Endothelial cell of umbilical vein (primary cell): ENCODE measurements at regions of chr2 and their contacts with region 1.

Region 1: DNA sequence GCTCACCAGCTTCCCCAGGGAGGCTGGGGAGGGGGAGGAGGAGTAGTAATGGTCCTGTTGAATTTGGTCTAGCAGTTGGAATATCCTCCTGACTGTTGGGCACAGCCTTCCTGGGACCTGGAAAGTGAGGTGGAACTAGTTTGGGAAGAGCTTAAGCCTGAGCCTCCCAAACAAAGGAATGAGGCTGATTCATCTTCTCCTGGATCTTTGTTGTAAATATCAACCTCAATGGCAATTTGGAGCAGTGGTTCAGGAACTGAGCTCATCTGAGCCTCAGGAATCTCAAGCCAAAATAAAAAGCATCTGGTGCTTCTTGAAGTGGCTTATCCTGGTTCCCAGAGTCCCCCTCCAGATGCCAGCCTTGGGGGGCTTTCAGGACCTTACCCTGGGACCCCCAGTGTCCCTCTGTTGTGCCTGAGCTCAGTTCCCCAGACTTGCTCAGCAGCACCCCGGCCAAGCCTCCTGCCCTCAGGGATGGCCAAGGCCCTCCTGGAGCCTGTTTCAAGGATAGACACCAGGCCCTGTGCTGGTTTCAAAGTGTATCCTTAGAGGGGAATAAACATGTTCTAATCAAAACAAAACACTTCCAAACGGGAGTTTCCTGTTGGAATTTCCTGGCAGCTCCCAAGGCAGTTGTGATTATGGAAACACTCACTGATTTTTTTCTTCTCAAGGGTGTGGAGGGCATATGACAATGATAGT is 112.6 kb downstream of the DDX1 start:
- DNase-seq: peak; percentile 76
- H3K4me3 ChIP-seq: no peak overlapping the region
- H3K27ac ChIP-seq: peak overlapping the region; percentile 85
- H3K4me1 ChIP-seq: peaks cover 35% of the 10 kb centered on the region
- H3K27me3 ChIP-seq: no peaks in the 10 kb centered on the region
- CTCF ChIP-seq: no peak
- POLR2A ChIP-seq: no peak

Region 2: DNA sequence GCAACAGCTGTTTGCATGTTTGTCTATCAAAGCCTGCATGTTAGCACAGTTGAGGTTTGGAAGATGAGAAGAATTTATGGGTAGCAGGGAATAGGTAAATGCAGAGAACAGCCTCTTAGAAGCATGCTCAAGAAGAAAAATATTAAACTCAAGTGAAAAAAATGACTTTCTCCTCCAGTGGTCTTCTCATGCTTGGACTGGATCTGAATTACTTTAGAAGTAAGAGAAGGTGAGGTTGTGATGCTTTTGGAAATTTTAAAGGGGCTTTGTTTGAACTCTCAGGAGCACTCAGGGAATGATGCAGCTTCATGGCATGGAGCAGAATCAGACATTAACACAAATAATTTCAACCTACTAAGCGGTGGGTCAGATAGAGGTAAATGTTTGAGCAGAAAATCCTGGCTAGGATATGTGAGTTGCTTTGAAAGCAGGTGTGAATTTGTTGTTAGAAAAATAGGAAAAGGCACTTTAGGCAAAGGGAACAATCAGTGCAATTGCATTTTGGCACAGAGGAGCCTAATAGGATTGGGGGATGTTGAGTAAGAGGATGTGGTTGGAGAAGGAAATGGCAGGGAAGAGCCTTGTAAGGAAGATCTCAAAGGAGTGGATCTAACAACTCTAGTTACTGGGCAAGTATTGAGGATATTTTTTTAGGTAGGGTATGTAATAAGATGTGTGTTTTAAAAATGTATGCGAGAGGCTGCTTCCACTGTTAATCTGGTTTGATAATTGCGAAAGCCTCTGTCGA is 36.3 kb before region 1 on chr2:
- CTCF ChIA-PET with region 1: interaction called, 3 read pairs
- POLR2A ChIA-PET with region 1: no interaction called
- dilution Hi-C with region 1: no loop called
- intact Hi-C with region 1: loop called (anchors 1 kb)
- DNase-seq: peak; percentile 39
- H3K4me3 ChIP-seq: no peak overlapping the region
- H3K27ac ChIP-seq: peak overlapping the region; percentile 72
- H3K4me1 ChIP-seq: peaks cover 24% of the 10 kb centered on the region
- H3K27me3 ChIP-seq: no peaks in the 10 kb centered on the region
- CTCF ChIP-seq: no peak
- POLR2A ChIP-seq: no peak

Region 3: GRCh38 chr2:15730545-15731212 is 26.4 kb after region 1 on chr2:
- CTCF ChIA-PET with region 1: interaction called, 7 read pairs
- POLR2A ChIA-PET with region 1: no interaction called
- dilution Hi-C with region 1: no loop called
- intact Hi-C with region 1: loop called (anchors 1 kb)
- DNase-seq: peak; percentile 97
- H3K4me3 ChIP-seq: no peak overlapping the region
- H3K27ac ChIP-seq: peak overlapping the region; percentile 24
- H3K4me1 ChIP-seq: peaks cover 31% of the 10 kb centered on the region
- H3K27me3 ChIP-seq: peaks cover 0 to 1% of the 10 kb centered on the region in 2 experiments
- CTCF ChIP-seq: no peak
- POLR2A ChIP-seq: peak; percentile 24

Region 4: DNA sequence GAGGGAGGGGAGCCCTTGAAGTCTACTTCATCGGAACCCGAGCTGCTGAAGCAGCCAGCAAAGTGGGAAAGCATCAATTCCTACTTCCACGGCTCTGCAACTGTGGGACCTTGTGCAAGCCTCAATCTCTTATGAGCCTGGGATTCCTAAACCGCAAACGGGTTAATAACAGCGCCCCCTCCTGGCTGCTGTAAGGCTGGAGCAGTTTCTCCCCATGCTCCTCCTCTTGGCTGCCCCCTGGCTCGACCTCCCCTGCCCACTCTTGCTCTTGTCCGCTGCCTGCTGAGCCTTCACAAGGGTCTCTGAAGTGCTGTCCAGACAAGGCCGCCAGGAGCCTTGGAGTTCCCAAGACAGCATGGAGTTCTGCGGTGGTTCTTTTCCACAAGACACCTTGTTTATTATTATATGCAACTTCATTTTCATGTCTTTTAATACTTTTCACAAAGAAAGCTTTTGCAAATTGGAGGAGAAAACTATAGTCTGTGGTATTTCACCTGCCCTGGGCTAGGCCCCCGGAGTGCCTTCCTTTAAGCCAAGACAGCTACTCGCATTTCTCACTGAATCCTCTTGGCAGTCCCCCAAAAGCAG is 44.6 kb after region 1 on chr2:
- CTCF ChIA-PET with region 1: no interaction called
- POLR2A ChIA-PET with region 1: no interaction called
- dilution Hi-C with region 1: no loop called
- intact Hi-C with region 1: loop called (anchors 1 kb)
- DNase-seq: no peak
- H3K4me3 ChIP-seq: no peak overlapping the region
- H3K27ac ChIP-seq: no peak overlapping the region
- H3K4me1 ChIP-seq: peaks cover 16% of the 10 kb centered on the region
- H3K27me3 ChIP-seq: peaks cover 0 to 2% of the 10 kb centered on the region in 2 experiments
- CTCF ChIP-seq: peak; percentile 51
- POLR2A ChIP-seq: no peak

Region 5: DNA sequence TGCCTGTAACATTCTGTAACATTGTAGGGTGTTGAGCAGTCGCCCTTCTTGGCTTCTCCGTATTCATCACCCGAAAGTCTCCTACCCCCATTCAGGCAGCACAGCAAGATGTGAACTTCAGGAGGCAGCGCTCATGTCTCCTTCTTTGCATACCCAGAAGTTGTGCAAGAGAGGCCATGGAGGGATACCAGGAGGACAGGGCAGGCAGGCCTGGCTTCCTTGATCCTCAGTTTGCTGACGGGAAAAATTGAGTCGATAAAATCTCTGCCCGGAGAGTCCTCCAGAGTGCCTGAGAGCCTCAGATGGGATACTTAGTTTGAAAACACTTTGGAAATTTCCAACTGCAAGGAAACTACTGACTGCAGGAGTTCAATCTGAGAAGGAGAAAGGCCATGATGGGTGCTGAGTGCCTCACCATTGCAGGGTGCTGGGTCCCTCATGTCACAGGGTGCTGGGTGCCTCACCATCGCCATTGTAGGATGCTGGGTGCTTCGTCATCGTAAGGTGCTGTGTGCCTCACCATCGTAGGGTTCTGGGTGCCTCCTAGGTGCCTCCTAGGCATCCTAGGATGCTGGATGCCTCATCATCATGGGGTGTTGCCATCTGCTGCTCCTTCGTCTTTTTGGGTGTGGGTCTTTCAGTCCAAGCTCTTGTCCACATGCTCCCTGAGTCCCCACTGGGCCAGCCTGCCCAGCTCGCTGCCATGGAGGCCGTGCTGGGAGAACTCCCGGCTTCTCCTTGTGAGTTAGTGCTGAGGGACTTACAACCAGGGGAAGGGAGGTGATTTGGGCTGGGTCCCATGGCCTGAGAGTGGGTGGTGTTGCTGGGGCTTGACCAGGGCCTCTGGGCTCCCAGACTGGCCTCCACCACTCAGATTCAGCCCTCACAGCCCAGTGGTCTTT is 49.8 kb after region 1 on chr2:
- CTCF ChIA-PET with region 1: interaction called, 4 read pairs
- POLR2A ChIA-PET with region 1: no interaction called
- dilution Hi-C with region 1: no loop called
- intact Hi-C with region 1: loop called (anchors 1 kb)
- DNase-seq: no peak
- H3K4me3 ChIP-seq: no peak overlapping the region
- H3K27ac ChIP-seq: no peak overlapping the region
- H3K4me1 ChIP-seq: peaks cover 19% of the 10 kb centered on the region
- H3K27me3 ChIP-seq: peaks cover 4 to 15% of the 10 kb centered on the region in 2 experiments
- CTCF ChIP-seq: no peak
- POLR2A ChIP-seq: no peak

Region 6: GRCh38 chr2:15912205-15912604 is 208.0 kb after region 1 on chr2:
- CTCF ChIA-PET with region 1: no interaction called
- POLR2A ChIA-PET with region 1: no interaction called
- dilution Hi-C with region 1: no loop called
- intact Hi-C with region 1: loop called (anchors 1 kb)
- DNase-seq: peak; percentile 88
- H3K4me3 ChIP-seq: no peak overlapping the region
- H3K27ac ChIP-seq: no peak overlapping the region
- H3K4me1 ChIP-seq: no peaks in the 10 kb centered on the region
- H3K27me3 ChIP-seq: no peaks in the 10 kb centered on the region
- CTCF ChIP-seq: no peak
- POLR2A ChIP-seq: no peak